ENCODE measurements at regions of chr22 and their contacts with region 1.

Region 1: GRCh38 chr22:25482868-25483639 is 81.4 kb upstream of the GRK3 start:
- DNase-seq: no peak
- H3K4me3 Mint-ChIP-seq: no peak overlapping the region
- H3K27ac Mint-ChIP-seq: peak overlapping the region; percentile 80
- H3K4me1 Mint-ChIP-seq: peaks cover 48% of the 10 kb centered on the region
- H3K27me3 Mint-ChIP-seq: no peaks in the 10 kb centered on the region

Region 2: GRCh38 chr22:25494774-25495173 is 11.7 kb after region 1 on chr22:
- intact Hi-C with region 1: loop called (anchors 1 kb)
- DNase-seq: no peak
- H3K4me3 Mint-ChIP-seq: peak overlapping the region; percentile 52
- H3K27ac Mint-ChIP-seq: peak overlapping the region; percentile 67
- H3K4me1 Mint-ChIP-seq: peaks cover 17% of the 10 kb centered on the region
- H3K27me3 Mint-ChIP-seq: peaks cover 13% of the 10 kb centered on the region